Panc1 (cell line): ENCODE measurements at regions of chr5 and their contacts with region 1.

Region 1: DNA sequence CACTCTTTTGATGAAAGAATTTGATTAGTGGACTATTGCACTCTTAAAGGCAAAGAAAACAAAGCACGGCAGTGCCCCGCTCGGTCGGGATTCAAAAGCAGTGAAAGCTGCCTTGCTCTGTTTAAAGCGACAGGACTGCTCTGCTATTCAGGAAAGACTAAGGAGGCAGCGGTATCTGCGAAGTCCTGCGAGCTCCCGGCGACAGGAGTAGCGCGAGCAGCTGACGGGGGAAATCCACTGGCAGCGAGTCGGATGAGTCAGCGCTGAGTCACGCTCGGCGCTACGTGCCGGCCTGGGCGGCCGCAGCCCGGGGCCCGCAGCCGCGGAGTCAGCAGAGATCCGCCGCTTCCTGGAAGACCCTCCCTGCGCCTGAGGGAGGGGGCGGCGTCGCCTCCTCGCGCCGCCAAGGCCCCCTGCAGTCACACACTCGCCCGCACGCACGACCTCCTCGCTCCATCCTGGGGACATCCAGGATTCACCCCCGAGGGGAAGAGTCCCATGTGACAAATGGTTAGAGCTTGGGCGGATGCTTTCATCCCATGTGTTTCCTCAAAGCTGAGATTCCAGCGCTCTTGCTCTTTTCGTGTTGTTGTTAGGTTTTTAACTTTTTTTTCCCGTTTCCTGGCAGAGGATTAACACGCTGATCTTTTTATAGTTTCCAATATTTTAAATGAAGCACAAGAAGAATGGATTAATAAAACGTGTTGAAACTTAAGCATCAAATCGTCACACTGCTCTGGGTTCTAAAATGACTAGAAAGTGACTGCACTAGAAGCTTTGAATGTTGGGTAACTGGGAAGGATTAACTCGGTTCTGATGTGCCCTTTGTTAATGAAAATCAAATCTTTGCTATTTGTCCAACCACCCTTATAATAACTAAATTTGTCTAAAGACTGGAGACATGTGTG is 102.5 kb downstream of the ARRDC3 start:
- DNase-seq: peak; percentile 93
- ATAC-seq: peak; percentile 98
- H3K4me3 ChIP-seq: peak overlapping the region; percentile 52 to 68
- H3K27ac ChIP-seq: peak overlapping the region; percentile 98
- H3K4me1 ChIP-seq: peaks cover 17% of the 10 kb centered on the region
- H3K27me3 ChIP-seq: no peaks in the 10 kb centered on the region
- CTCF ChIP-seq: no peak

Region 2: GRCh38 chr5:90944116-90944515 is 336.5 kb before region 1 on chr5:
- CTCF ChIA-PET with region 1: interaction called, 11 read pairs
- POLR2A ChIA-PET with region 1: no interaction called
- in situ Hi-C with region 1: no loop called
- intact Hi-C with region 1: no loop called
- DNase-seq: no peak
- ATAC-seq: no peak
- H3K4me3 ChIP-seq: no peak overlapping the region
- H3K27ac ChIP-seq: no peak overlapping the region
- H3K4me1 ChIP-seq: no peaks in the 10 kb centered on the region
- H3K27me3 ChIP-seq: no peaks in the 10 kb centered on the region; the same call in 1 of the 2 replicates
- CTCF ChIP-seq: no peak

Region 3: DNA sequence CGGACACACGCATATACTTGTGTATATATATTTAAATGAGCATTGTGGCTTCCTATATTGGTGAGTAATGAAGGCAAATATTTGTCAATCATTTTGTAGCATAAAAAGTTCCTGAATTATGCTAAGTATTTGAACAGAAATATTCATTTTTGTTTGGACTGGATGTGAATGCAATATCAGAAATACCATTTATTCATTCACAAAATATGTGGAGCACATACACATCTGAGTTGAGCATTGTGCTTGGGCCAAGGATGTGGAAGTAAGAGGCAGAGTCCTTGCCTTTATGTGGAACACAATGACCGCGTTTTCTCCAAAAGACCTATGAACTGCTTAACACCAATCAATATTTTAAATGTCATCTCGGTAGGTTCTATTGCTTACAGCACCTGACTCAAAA is 1213.9 kb after region 1 on chr5:
- CTCF ChIA-PET with region 1: no interaction called
- POLR2A ChIA-PET with region 1: no interaction called
- in situ Hi-C with region 1: no loop called
- intact Hi-C with region 1: no loop called
- DNase-seq: no peak
- ATAC-seq: no peak
- H3K4me3 ChIP-seq: no peak overlapping the region
- H3K27ac ChIP-seq: peak overlapping the region; percentile 57; the same call in 1 of the 2 replicates
- H3K4me1 ChIP-seq: no peaks in the 10 kb centered on the region
- H3K27me3 ChIP-seq: no peaks in the 10 kb centered on the region
- CTCF ChIP-seq: no peak